ENCODE measurements at regions of chr16 and their contacts with region 1.

Region 1: GRCh38 chr16:31440516-31441184 is 1.9 kb downstream of the ZNF843 start:
- DNase-seq: no peak
- H3K4me3 ChIP-seq: no peak overlapping the region
- CTCF ChIP-seq: no peak

Region 2: GRCh38 chr16:31202414-31203375 is 238.0 kb before region 1 on chr16 and contains the start of gene PYCARD:
- CTCF ChIA-PET with region 1: interaction called, 18 read pairs
- POLR2A ChIA-PET with region 1: interaction called, 3 read pairs
- DNase-seq: no peak
- H3K4me3 ChIP-seq: peak within 1 kb of the TSS; percentile 69
- CTCF ChIP-seq: no peak

Region 3: GRCh38 chr16:31301708-31302400 is 138.8 kb before region 1 on chr16:
- CTCF ChIA-PET with region 1: no interaction called
- POLR2A ChIA-PET with region 1: no interaction called
- DNase-seq: no peak
- H3K4me3 ChIP-seq: no peak overlapping the region
- CTCF ChIP-seq: no peak

Region 4: DNA sequence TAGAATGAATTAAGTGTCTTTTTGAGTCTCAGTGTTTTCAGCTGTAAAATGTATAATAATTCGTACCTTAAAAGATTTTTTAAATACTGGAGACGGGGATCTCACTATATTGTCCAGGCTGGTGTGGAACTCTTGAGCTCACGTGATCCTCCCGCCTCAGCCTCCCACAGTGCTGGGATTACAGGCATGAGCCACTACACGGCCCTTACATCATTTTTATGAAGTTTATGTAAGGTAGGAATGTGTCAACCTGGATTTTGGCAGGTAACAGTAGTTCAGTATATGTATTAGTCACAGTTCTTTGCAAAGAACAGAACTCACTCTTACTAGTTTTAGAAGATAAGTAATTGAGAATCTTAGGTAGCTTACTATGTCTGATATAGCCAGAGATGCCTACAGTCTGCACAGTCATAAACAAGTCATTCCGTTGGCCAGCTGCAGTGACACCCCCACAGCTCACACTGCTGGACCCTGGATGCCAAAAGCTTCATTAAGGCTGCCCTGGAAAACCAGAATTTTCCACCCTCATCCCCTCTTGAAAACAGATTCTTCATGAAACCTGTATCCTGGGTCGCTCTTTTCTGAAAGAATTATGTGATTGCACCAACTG is 11.9 kb before region 1 on chr16:
- CTCF ChIA-PET with region 1: interaction called, 13 read pairs
- POLR2A ChIA-PET with region 1: interaction called, 3 read pairs
- DNase-seq: no peak
- H3K4me3 ChIP-seq: no peak overlapping the region
- CTCF ChIP-seq: no peak

Region 5: GRCh38 chr16:31451681-31452351 is 11.2 kb after region 1 on chr16:
- CTCF ChIA-PET with region 1: interaction called, 134 read pairs
- POLR2A ChIA-PET with region 1: interaction called, 15 read pairs
- DNase-seq: no peak
- H3K4me3 ChIP-seq: no peak overlapping the region
- CTCF ChIP-seq: peak; percentile 87

Measured in AG04449 (cell line).